Transverse colon (tissue), 4 donors: ENCODE measurements at regions of chr1 and their contacts with region 1.

Region 1: GRCh38 chr1:16954579-16954978 is 25.8 kb downstream of the MFAP2 start:
- DNase-seq: no peak
- H3K4me3 ChIP-seq: no peak overlapping the region
- H3K27ac ChIP-seq: no peak overlapping the region
- H3K4me1 ChIP-seq: peaks cover 0 to 3% (median 2%) of the 10 kb centered on the region in 4 donors
- H3K27me3 ChIP-seq: no peaks in the 10 kb centered on the region
- CTCF ChIP-seq: no peak
- EP300 ChIP-seq: no peak
- POLR2A ChIP-seq: no peak

Region 2: DNA sequence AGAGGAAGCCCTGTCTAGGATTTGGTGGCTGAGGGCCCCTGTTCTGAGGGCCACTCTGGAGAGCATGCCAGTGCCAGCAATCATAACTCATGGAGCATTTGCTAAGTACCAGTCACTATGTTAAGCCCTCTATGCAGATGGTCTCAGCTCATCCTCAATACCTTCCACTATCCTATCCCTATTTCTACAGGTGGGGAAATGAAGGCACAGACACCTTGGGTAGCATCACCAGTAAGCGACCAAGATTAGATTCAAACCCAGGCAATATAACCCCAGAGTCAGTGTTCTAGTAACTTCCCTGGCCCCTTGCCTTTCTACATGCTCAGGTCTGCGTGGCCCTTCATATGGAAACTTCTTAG is 333.3 kb before region 1 on chr1:
- in situ Hi-C with region 1: loop called in 3 of 4 experiments (anchors 5 to 10 kb)
- intact Hi-C with region 1: no loop called
- DNase-seq: no peak
- H3K4me3 ChIP-seq: no peak overlapping the region
- H3K27ac ChIP-seq: no peak overlapping the region
- H3K4me1 ChIP-seq: peaks cover 3 to 18% (median 15%) of the 10 kb centered on the region in 4 donors
- H3K27me3 ChIP-seq: no peaks in the 10 kb centered on the region
- CTCF ChIP-seq: peak in 1 of 5 experiments; percentile 34
- EP300 ChIP-seq: no peak
- POLR2A ChIP-seq: no peak

Region 3: GRCh38 chr1:16999863-17000262 is 45.3 kb after region 1 on chr1:
- in situ Hi-C with region 1: no loop called
- intact Hi-C with region 1: no loop called
- DNase-seq: no peak
- H3K4me3 ChIP-seq: no peak overlapping the region
- H3K27ac ChIP-seq: no peak overlapping the region
- H3K4me1 ChIP-seq: no peaks in the 10 kb centered on the region
- H3K27me3 ChIP-seq: no peaks in the 10 kb centered on the region
- CTCF ChIP-seq: no peak
- EP300 ChIP-seq: no peak
- POLR2A ChIP-seq: no peak

Region 4: DNA sequence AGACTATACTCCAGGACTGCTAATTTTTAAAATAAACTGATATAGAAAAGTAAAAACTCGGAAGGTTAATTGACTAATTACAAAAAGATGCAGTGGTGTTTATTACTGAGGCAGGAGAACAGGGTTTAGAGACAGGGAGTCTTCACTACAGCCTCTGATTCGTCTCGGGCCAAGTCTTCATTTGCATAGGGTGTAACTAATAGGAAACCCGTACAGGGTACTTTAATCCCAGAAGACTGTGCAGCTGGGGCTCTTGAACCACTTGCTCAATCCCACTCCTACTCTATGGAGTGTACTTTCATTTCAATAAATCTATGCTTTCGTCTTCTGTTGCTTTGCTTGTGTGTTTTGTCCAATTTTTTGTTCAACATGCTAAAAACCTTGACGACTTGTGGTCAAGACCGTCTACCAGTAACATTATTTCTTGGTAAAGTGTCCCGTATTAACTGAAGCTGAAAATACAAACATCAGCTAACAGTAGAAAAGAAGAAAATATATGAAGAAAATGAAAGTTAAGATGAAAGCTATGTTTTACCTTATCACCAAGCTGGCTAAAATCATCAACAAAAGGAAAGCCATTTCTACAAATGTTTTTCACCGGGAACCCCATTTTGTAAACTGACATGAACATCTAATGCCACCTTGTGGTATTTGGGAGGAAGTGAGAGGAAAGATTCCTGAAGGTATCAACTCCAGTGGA is 91.2 kb after region 1 on chr1:
- in situ Hi-C with region 1: loop called in 2 of 4 experiments (anchors 5 to 10 kb)
- intact Hi-C with region 1: loop called (anchors 5 kb)
- DNase-seq: no peak
- H3K4me3 ChIP-seq: peak overlapping the region in 2 of 4 donors; percentile 1 to 13
- H3K27ac ChIP-seq: peak overlapping the region in 3 of 4 donors; percentile 3 to 36 (median 7)
- H3K4me1 ChIP-seq: peaks cover 0 to 17% (median 4%) of the 10 kb centered on the region in 4 donors
- H3K27me3 ChIP-seq: no peaks in the 10 kb centered on the region
- CTCF ChIP-seq: peak; percentile 69 to 84 (median 71)
- EP300 ChIP-seq: no peak
- POLR2A ChIP-seq: no peak

Region 5: DNA sequence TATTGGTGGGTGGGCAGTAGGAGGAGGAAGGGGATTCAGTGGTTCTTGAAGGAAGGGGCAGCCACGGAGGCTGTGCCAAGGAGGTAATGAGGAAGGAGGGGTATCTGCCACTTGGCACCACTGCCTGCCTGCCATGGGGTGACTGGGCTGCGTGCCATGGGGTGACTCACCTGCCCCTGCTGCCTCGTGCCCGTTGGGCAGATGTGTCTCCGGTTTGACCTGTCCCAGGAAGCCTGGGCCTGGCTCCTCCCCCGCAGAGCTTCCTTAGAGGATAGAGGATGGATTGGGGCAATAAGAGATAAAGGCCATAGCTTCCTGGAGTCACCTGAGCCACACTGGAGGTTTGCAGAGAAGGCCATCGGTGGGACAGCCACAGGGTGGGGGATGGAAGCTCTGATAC is 296.0 kb after region 1 on chr1:
- in situ Hi-C with region 1: no loop called
- intact Hi-C with region 1: no loop called
- DNase-seq: peak; percentile 93
- H3K4me3 ChIP-seq: no peak overlapping the region
- H3K27ac ChIP-seq: peak overlapping the region in 2 of 4 donors; percentile 48 to 54
- H3K4me1 ChIP-seq: peaks cover 0 to 20% (median 10%) of the 10 kb centered on the region in 4 donors
- H3K27me3 ChIP-seq: no peaks in the 10 kb centered on the region
- CTCF ChIP-seq: no peak
- EP300 ChIP-seq: no peak
- POLR2A ChIP-seq: no peak